T-cell (primary cell): ENCODE measurements at regions of chr17 and their contacts with region 1.

Region 1: DNA sequence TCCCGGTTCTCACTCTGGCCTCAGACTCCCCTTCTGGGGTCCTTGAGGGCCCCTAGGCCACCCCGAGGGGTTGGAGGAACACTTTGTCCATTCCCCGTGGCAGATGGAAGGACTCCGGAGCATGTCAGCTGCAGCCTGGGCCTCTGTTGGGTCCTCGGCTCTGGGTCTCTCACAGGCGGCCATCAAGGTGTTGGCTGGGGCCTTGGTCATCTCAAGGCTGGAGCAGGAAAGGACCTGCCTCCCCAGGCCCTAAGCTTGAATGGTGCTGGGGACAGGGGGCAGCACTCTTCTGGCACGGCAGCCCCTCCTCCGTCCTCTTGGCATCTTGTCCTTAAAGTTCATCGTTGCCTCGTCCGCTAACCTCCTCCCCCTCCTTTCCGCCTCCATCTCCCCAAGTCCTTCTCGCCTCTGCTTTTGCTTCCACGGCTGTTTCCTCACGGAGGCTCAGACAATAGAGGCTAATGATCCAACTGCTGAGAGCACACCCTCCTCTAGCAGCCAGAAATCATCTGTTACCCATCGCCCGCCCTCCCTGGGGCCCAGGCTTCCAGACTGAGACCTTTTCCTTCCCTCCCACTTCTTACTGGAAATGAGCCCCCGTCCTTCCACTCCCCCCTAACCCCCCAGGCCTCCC is 23.2 kb downstream of the CCR7 start:
- DNase-seq: peak in 1 of 35 experiments; percentile 43
- ATAC-seq: no peak
- H3K4me3 ChIP-seq: peak overlapping the region in 1 of 2 donors; percentile 13
- H3K4me3 Mint-ChIP-seq: peak overlapping the region; percentile 37 to 83 (median 70)
- H3K27ac ChIP-seq: peak overlapping the region; percentile 79
- H3K27ac Mint-ChIP-seq: peak overlapping the region; percentile 91 to 94
- H3K4me1 ChIP-seq: peaks cover 57 to 91% of the 10 kb centered on the region in 2 experiments
- H3K4me1 Mint-ChIP-seq: peaks cover 82 to 91% (median 89%) of the 10 kb centered on the region in 3 donors
- H3K27me3 ChIP-seq: peaks cover 0 to 2% of the 10 kb centered on the region in 2 experiments
- H3K27me3 Mint-ChIP-seq: no peaks in the 10 kb centered on the region

Region 2: DNA sequence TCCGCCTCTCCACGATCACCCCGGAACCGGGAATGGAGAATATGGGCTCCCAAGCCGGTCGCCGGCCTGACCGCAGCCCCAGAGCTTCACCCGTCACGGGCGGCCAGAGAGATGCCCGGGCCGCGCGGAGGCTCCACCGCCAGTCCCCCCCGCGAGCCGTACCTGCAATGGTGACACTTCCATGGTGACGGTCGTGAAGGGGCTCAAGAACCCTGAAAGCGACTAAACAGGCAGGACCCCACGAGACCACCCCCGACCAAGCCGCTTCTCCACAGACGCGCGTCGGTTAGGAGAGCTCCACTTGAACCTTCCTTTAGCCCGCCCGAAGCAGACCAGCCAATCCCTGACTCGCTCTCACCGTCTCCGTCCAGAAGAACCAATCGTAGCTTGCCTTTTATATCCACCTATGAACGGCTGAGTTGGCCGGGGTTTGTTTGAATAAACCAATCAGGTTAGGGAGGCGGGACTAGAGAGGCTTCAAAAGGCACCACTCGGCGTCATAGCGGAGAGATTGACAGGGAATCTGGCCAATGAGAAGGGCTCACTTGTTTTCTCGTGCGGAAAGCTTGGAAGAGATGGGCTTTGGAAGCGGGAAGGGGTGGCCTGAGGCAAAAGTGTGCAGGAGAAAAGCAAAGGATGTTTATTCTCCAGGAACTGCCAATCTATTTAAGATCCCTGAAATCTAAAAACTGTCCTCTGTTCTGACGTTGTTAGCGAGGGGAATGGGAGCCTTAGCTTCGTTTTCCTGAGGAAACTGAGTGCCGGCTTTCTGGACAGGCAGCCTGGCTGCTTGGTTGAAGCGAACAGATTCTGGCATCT is 124.2 kb before region 1 on chr17 and contains the start of gene TOP2A:
- CTCF ChIA-PET with region 1: interaction called in 1 of 2 experiments, 5 read pairs
- POLR2A ChIA-PET with region 1: interaction called in 1 of 2 experiments, 13 read pairs
- DNase-seq: peak; percentile 81 to 100 (median 95)
- ATAC-seq: peak; percentile 98 to 100 (median 99)
- H3K4me3 ChIP-seq: peak within 1 kb of the TSS; percentile 61 to 74
- H3K4me3 Mint-ChIP-seq: peak within 1 kb of the TSS; percentile 82 to 92 (median 90)
- H3K27ac ChIP-seq: peak within 1 kb of the TSS; percentile 43
- H3K27ac Mint-ChIP-seq: peak within 1 kb of the TSS; percentile 88 to 91
- H3K4me1 ChIP-seq: peaks cover 7 to 28% of the 10 kb centered on the region in 2 experiments
- H3K4me1 Mint-ChIP-seq: peaks cover 27 to 30% (median 28%) of the 10 kb centered on the region in 3 donors
- H3K27me3 ChIP-seq: peaks cover 0 to 8% of the 10 kb centered on the region in 2 experiments
- H3K27me3 Mint-ChIP-seq: no peaks in the 10 kb centered on the region
- total RNA-seq, gene TOP2A: 2.3 to 4.2 (median 2.7) TPM